ENCODE measurements at regions of chr11 and their contacts with region 1.

Region 1: GRCh38 chr11:60193687-60194433 is 11.0 kb upstream of the MS4A6A start:
- DNase-seq: no peak
- ATAC-seq: peak in 1 of 2 donors; percentile 33
- H3K4me3 ChIP-seq: no peak overlapping the region
- H3K27ac ChIP-seq: no peak overlapping the region
- H3K4me1 ChIP-seq: no peaks in the 10 kb centered on the region
- H3K27me3 ChIP-seq: no peaks in the 10 kb centered on the region
- CTCF ChIP-seq: peak; percentile 39 to 71 (median 63)
- POLR2A ChIP-seq: no peak

Region 2: DNA sequence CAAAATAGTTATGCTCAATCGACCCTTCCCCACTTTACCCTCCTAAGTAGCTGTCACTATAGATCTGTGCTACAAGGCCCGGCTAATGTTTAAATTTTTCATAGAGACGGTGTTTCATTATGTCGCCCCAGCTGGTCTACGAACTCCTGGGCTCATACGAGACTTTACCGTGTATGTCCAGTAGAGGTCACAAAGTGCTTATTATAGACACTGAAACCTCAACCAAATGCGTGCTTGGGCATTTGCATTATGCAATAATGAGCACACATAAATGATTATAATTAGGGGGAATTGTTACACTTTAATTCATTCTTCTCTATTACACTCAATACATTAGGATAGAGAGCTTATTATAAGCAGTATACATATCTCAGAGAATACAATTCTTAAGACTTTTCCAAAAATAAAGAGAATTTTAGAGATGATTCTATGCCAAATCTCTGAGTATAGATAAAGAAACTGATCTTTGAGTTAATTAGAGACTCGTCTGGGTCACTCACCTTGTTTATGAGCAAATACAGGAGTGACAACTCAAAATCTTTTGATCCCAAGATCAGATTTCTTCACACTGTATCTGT is 370.8 kb before region 1 on chr11:
- in situ Hi-C with region 1: no loop called
- intact Hi-C with region 1: loop called (anchors 10 kb)
- DNase-seq: no peak
- ATAC-seq: peak in 1 of 2 donors; percentile 79
- H3K4me3 ChIP-seq: no peak overlapping the region
- H3K27ac ChIP-seq: no peak overlapping the region
- H3K4me1 ChIP-seq: no peaks in the 10 kb centered on the region
- H3K27me3 ChIP-seq: no peaks in the 10 kb centered on the region
- CTCF ChIP-seq: peak in 3 of 5 experiments; percentile 21 to 42 (median 41)
- POLR2A ChIP-seq: no peak

Region 3: DNA sequence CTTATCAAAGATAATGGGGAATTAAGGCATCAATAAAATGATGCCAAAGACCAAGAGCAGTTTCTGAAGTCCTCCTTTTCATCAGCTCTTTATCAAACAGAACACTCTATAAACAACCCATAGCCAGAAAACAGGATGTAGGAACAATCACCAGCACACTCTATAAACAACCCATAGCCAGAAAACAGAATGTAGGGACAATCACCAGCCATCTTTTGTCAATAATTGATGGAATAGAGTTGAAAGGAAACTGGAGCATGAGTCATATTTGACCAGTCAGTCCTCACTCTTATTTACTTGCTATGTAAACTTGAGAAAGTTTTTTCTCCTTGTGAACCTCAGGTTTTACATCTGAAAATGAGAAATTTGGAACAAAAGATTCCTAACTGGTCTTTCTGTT is 95.4 kb before region 1 on chr11:
- in situ Hi-C with region 1: loop called in 1 of 4 experiments (anchors 25 kb)
- intact Hi-C with region 1: no loop called
- DNase-seq: no peak
- ATAC-seq: no peak
- H3K4me3 ChIP-seq: no peak overlapping the region
- H3K27ac ChIP-seq: no peak overlapping the region
- H3K4me1 ChIP-seq: no peaks in the 10 kb centered on the region
- H3K27me3 ChIP-seq: no peaks in the 10 kb centered on the region
- CTCF ChIP-seq: no peak
- POLR2A ChIP-seq: no peak

Region 4: DNA sequence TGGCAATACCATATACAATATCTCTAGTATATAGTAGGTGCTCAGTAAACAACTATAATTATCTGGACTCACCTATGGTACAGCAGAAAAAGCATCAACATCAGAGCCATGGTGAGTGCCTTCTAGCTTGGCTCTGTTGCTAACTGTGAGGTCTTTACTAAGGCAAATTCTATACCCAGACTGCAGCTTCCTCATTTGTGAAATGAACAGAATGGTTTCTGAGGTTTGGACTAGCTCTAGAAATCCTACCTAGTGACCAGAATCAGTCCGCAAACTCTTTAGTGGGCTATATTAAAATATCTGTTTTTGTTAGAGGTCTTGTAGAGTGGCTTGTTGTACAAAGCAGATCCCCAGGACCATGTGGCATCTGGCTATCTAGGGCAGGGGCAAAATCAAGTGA is 265.5 kb after region 1 on chr11:
- in situ Hi-C with region 1: no loop called
- intact Hi-C with region 1: no loop called
- DNase-seq: no peak
- ATAC-seq: no peak
- H3K4me3 ChIP-seq: no peak overlapping the region
- H3K27ac ChIP-seq: no peak overlapping the region
- H3K4me1 ChIP-seq: no peaks in the 10 kb centered on the region
- H3K27me3 ChIP-seq: no peaks in the 10 kb centered on the region
- CTCF ChIP-seq: no peak
- POLR2A ChIP-seq: no peak

Region 5: DNA sequence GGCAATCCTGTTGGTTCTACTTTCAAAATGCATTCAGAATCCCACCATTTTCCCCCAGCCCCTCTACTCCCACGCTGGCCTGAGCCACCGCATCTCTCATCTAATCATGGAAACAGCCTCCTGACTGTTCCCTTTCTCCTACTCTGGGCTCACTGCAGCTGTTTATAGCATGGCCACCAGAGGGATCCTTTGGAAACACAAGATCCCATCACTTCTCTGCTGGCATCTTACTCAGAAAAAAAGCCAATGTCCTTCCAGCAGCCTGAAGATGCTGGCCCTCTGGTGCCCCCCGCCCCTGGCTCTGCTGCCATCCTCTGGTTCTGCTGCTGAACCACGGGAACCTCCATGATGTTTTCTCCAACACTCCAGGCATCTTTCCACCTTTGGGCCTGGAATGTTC is 516.6 kb after region 1 on chr11:
- in situ Hi-C with region 1: no loop called
- intact Hi-C with region 1: no loop called
- DNase-seq: no peak
- ATAC-seq: no peak
- H3K4me3 ChIP-seq: no peak overlapping the region
- H3K27ac ChIP-seq: no peak overlapping the region
- H3K4me1 ChIP-seq: no peaks in the 10 kb centered on the region
- H3K27me3 ChIP-seq: no peaks in the 10 kb centered on the region
- CTCF ChIP-seq: no peak
- POLR2A ChIP-seq: no peak

Measured in gastrocnemius medialis (tissue), 4 donors.